Prostate gland (tissue), 2 donors: ENCODE measurements at regions of chr10 and their contacts with region 1.

Region 1: DNA sequence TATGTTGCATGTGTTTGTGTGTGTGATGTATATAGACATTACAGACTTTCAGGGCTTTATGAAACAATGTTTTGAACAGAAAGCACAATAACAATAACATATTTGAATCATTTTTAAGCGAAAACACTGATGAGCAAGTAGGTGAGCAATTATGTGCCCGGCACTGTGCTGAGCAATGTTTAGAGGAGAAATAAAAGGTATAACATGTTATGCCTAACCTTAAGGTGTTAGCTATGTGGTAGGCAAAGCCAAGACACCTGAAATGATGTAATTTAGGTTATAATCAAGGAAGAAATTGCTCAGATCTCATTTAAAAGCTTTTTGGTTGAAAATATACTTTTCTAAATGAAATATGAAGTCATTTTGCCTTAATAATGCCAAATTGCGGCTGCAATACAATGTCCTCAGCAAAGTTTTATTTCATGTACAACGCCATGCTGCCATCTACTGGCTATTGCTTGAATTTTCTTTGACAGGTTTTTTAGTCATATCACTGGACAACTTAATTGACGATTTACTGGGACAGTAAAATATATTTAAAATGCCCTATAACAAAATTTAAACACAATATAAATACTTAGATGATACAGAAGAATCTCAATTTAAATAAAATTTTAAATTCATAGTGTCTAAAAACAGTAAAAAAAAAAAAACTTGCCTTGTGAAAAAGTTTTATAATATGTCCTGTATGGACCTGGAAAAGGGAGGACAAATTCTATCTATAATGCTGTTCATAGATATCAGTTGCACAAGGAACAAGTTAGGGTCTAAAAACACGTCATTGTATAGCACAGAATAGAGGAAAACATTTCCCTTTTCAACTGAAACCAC is 131.1 kb upstream of the CDK1 start:
- DNase-seq: peak; percentile 46
- H3K4me3 ChIP-seq: no peak overlapping the region
- H3K27ac ChIP-seq: no peak overlapping the region
- H3K4me1 ChIP-seq: peaks cover 5% of the 10 kb centered on the region
- H3K27me3 ChIP-seq: no peaks in the 10 kb centered on the region
- CTCF ChIP-seq: peak; percentile 26 to 85 (median 78)
- POLR2A ChIP-seq: no peak

Region 2: DNA sequence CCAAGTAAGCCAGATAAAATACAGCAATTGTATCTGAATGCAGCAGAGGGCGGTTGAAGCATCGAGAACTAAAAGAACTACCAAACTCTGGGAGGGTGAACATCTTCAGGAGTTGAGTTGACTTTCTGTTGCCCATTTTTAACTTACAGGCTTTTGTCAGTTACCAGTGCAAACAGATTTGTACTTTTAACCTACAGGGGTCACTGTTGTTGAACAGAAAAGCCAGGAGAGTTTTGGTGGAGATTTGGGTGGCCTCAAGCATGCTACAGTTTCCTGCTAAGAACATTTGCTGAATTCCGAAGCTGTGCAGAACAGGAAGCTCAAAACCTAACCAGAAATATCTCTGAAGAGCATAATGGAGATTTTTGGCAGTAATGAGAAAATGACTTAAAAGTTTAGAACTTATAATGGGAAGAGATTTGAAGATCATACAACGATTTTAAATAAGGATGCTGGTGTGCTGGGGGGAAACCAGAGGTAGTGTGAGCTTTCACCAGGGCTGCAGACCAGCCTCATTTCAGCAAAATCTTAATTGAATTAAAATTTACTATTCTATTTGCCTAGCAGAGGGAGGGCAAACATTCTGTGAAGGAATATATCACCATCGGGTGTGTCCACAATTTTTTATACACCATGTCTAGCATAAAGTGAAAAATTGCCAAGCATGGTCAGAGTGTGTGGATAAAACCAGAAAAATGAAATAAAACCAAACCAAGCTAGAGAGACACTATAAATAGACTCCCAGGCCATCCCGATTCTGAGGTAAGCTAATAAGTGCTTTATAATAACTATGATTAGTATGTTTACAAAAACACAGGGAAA is 532.2 kb before region 1 on chr10:
- intact Hi-C with region 1: loop called (anchors 10 kb)
- DNase-seq: no peak
- H3K4me3 ChIP-seq: no peak overlapping the region
- H3K27ac ChIP-seq: no peak overlapping the region
- H3K4me1 ChIP-seq: no peaks in the 10 kb centered on the region
- H3K27me3 ChIP-seq: no peaks in the 10 kb centered on the region
- CTCF ChIP-seq: peak in 3 of 4 experiments; percentile 48 to 57 (median 53)
- POLR2A ChIP-seq: no peak

Region 3: DNA sequence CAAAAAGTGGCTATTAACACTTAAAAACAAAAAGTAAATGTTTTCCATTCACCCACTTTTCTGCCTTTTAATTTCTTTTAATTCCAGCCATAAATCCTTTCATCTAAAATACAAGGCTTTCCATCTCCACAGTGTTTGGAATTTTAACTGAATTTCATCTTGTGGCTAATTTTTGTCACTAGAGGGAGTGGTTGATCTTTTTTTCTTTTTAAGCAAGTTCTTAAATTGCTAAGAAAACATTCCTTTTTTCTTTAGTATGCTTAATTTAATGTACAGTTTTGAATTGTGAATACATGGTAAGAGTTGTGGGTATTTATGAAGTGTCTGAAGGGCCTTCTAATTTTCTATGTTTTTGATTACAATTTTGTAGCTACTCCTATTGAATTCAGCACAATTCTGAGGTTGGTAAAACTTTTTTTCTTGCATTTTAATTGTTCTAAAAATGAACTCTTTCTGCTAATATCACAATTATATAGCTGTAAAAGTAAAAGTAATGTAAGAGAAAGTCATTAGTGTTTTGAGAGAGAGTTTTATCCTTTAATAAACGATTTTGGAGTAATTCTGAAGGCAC is 202.6 kb before region 1 on chr10:
- intact Hi-C with region 1: loop called (anchors 2 kb)
- DNase-seq: no peak
- H3K4me3 ChIP-seq: no peak overlapping the region
- H3K27ac ChIP-seq: no peak overlapping the region
- H3K4me1 ChIP-seq: no peaks in the 10 kb centered on the region
- H3K27me3 ChIP-seq: no peaks in the 10 kb centered on the region
- CTCF ChIP-seq: peak in 3 of 4 experiments; percentile 38 to 70 (median 65)
- POLR2A ChIP-seq: no peak

Region 4: DNA sequence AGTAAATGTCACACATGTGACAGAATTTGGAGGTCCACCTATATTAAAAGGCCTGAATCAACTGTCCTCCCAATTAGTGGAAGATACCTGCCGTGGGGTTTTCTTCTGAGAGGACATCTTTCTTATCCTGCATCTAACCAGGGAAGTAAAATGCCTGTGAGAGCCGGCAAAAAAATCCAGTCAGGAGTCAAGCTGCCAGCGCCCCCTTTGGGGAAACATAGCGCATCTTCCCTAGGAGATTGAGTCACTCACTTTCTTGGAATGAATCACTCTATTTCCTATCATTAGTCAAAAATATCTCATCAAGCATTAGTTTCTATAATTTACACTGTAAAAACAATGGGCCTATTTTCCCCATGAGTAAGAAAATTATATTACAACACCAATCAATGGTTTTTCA is 191.1 kb before region 1 on chr10:
- intact Hi-C with region 1: no loop called
- DNase-seq: no peak
- H3K4me3 ChIP-seq: no peak overlapping the region
- H3K27ac ChIP-seq: no peak overlapping the region
- H3K4me1 ChIP-seq: no peaks in the 10 kb centered on the region
- H3K27me3 ChIP-seq: no peaks in the 10 kb centered on the region
- CTCF ChIP-seq: no peak
- POLR2A ChIP-seq: no peak